Transverse colon (tissue), 4 donors: ENCODE measurements at regions of chr22 and their contacts with region 1.

Region 1: DNA sequence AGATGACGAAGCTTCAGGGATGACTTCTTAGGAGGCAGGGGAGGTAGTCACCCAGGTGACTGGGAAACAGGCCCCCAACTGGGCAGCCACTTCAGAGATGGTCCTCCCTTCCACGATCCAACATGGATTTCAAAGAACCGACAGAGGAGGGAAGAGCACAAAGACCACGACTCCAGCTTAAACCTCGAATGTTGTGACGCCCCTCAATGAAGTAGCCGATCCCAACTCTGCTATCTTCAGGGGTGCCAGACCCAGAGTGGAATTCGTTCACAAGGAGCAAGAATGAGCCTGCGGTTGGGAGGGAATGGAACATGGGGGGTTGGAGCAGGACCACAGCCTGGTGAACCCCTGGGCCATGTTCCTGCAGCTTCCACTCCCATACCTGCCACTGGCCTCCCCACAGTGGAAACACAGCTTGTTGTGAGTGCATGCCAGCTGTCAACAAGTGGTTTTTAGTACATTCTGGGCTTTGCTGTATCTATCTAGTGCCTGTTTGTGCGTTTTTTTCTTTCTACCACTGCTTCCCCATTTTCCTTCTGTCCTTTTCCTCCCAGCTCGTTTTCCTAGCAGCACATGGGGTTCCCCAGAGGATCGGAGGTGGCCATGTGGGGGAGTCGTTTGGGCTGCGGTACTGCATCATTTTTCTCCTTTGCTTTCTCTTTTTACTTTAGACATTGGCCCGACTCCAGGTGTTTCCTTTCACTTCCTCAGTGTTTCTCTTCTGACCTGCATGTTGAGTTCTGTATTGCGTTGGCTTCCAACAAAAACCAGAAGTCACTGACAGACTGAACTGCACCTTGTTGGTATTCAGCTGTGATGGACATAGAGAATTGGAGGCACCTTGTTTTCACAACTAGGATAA is 65.8 kb downstream of the MORC2 start:
- DNase-seq: no peak
- H3K4me3 ChIP-seq: no peak overlapping the region
- H3K27ac ChIP-seq: no peak overlapping the region
- H3K4me1 ChIP-seq: no peaks in the 10 kb centered on the region
- H3K27me3 ChIP-seq: no peaks in the 10 kb centered on the region
- CTCF ChIP-seq: no peak
- EP300 ChIP-seq: no peak
- POLR2A ChIP-seq: no peak

Region 2: GRCh38 chr22:30628491-30628890 is 274.2 kb before region 1 on chr22:
- in situ Hi-C with region 1: loop called in 1 of 4 experiments (anchors 25 kb)
- intact Hi-C with region 1: loop called (anchors 10 kb)
- DNase-seq: no peak
- H3K4me3 ChIP-seq: no peak overlapping the region
- H3K27ac ChIP-seq: no peak overlapping the region
- H3K4me1 ChIP-seq: no peaks in the 10 kb centered on the region
- H3K27me3 ChIP-seq: no peaks in the 10 kb centered on the region
- CTCF ChIP-seq: no peak
- EP300 ChIP-seq: no peak
- POLR2A ChIP-seq: no peak

Region 3: DNA sequence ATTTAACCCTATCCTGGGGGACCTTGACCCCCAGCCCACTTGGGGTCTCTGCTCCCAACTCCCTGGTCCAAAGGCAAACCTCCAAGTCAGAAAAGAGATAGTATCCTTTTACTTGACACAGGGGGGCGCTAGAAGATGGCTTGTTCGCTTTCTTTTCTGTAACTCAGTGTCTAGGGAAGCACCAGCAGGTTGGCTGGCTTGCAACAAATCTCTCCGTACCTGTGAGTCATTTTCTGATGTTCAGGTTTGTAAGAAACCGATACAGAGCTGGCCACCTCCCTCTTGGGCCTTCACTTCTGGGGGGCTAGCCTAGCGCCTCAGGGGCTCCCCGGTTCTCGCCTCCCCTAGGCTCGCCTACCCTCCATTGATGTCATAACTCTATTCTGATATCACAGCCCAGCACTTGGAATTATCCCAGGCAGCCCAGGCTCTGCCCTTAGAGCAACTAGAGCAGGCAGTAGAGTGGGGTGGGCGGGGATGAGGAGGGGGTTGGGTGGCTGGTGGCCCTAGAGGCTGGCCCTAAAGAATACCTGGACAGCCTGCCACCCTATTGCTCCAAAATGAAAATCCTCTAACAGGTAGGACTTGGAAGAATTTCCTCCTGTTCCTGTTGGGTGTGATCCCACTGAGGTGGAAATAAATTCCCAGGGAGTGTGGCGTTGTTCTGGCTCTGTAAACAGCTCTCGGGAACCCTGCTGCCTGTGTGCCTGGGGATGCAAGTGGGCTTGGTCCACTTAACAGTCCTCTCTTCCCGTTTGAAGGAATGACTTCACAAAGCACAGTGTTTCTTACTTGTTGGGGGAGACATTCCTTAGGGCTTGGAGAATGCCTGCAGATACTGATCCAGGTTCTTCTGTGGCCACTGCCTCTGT is 138.7 kb before region 1 on chr22:
- in situ Hi-C with region 1: no loop called
- intact Hi-C with region 1: loop called (anchors 10 kb)
- DNase-seq: peak; percentile 45
- H3K4me3 ChIP-seq: no peak overlapping the region
- H3K27ac ChIP-seq: no peak overlapping the region
- H3K4me1 ChIP-seq: peaks cover 0 to 12% (median 5%) of the 10 kb centered on the region in 4 donors
- H3K27me3 ChIP-seq: no peaks in the 10 kb centered on the region
- CTCF ChIP-seq: peak; percentile 43 to 72 (median 57)
- EP300 ChIP-seq: no peak
- POLR2A ChIP-seq: no peak

Region 4: DNA sequence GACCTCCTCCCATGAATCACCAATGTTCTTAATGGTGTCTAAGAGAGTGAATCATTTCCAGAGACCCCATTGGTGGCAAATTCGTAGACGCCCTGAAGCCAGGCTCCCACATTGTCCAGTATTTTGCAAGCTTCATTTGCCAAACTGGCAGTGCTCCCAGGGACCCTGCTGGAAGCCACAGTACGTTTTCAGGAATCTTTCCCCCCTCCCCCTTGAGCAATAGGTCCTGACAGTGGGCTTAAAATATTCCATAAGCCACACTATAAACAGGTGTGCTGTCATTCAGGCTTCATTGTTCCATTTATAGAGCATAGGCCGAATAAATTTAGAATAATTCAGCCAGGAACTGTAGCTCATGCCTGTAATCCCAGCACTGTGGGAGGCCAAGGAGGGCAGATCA is 59.5 kb before region 1 on chr22:
- in situ Hi-C with region 1: no loop called
- intact Hi-C with region 1: no loop called
- DNase-seq: no peak
- H3K4me3 ChIP-seq: no peak overlapping the region
- H3K27ac ChIP-seq: no peak overlapping the region
- H3K4me1 ChIP-seq: no peaks in the 10 kb centered on the region
- H3K27me3 ChIP-seq: no peaks in the 10 kb centered on the region
- CTCF ChIP-seq: no peak
- EP300 ChIP-seq: no peak
- POLR2A ChIP-seq: no peak